ENCODE measurements at regions of chr1 and their contacts with region 1.

Region 1: GRCh38 chr1:241531195-241532161 is 700 bp upstream of the KMO start:
- DNase-seq: peak in 1 of 2 experiments; percentile 36
- H3K4me3 ChIP-seq: peak overlapping the region; percentile 41
- H3K4me3 Mint-ChIP-seq: peak overlapping the region; percentile 86
- H3K27ac Mint-ChIP-seq: peak overlapping the region; percentile 31
- H3K4me1 ChIP-seq: no peaks in the 10 kb centered on the region
- H3K4me1 Mint-ChIP-seq: peaks cover 13% of the 10 kb centered on the region
- H3K27me3 ChIP-seq: no peaks in the 10 kb centered on the region
- H3K27me3 Mint-ChIP-seq: peaks cover 13% of the 10 kb centered on the region
- CTCF ChIP-seq: peak; percentile 26 to 49

Region 2: DNA sequence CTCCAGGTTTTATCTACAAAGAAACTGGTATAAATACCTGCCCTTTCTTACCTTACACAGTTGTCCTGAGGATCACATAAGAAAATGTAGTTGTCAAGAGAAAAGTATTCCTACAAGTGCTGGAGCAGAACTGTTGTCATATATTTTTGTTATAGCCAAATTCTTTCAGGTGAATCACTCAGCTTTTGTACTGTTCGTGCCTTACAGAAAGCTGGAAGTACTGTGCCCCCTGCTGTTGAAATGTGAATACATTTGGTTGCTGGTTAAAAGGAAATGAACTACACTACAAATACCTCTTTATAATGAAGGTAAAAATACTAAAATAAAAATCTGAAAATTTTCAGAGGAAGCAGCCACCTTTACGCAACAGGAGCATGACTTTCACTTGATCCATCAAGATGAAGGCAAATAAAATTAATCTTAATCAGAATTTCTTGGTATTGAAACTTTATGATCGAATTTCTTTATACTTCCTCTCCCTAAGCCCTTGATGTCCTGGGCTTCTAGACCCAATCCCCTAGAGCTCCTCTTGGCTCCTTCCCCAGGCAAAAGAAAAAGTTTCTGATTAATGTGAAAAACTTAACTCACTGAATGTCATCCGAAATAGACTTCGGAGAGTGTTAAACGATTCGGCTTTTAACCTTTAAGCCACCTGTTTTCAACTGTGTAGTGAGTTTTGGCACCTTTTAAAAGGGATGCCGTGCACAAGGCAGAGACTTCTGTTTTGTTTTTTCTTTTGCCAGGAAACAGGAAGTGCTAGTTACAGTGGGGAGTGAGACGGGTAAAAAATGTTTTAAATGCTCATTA is 96.2 kb after region 1 on chr1:
- CTCF ChIA-PET with region 1: no interaction called
- POLR2A ChIA-PET with region 1: no interaction called
- intact Hi-C with region 1: loop called (anchors 1 kb)
- DNase-seq: peak in 1 of 2 experiments; percentile 45
- H3K4me3 ChIP-seq: no peak overlapping the region
- H3K4me3 Mint-ChIP-seq: no peak overlapping the region
- H3K27ac Mint-ChIP-seq: no peak overlapping the region
- H3K4me1 ChIP-seq: peaks cover 5% of the 10 kb centered on the region; the same call in 1 of the 2 replicates
- H3K4me1 Mint-ChIP-seq: peaks cover 9% of the 10 kb centered on the region
- H3K27me3 ChIP-seq: no peaks in the 10 kb centered on the region
- H3K27me3 Mint-ChIP-seq: no peaks in the 10 kb centered on the region
- CTCF ChIP-seq: peak; percentile 51 to 52